ENCODE measurements at regions of chr19 and their contacts with region 1.

Region 1: DNA sequence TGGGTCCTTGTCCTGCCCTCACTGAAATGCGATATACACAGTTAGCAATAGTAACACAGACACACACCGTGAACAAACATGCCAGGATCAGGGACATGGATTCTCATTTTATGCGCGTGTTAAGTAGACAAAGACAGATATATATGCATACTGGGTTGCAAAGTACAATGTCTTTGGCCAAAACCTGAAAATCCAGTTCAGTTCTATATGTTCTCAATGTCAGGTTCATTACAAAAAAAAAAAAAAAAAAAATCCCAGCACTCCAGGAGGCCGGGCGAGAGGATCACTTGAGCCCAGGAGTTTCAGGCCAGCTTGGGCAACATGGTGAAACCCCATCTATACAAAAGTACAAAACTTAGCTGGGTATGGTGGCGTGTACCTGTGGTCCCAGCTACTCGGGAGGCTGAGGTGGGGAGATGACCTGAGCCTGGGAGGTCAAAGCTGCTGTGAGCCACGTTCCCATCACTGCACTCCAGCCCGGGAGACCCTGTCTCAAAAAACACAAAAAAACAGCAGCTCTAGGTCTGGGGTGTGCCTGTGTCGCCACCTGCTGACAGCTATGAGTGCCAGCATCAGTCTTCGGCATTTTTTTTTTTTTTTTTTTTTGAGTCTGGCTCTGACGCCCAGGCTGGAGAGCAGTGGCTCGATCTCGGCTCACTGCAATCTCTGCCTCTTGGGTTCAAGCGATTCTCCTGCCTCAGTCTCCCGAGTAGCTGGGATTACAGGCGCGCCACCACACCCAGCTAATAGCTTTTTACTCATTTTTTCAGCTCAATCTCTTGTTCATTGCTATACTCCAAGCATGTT is 10.3 kb downstream of the AP2S1 start:
- DNase-seq: peak in 12 of 14 experiments; percentile 25 to 87 (median 42)
- ATAC-seq: peak; percentile 93
- H3K4me3 ChIP-seq: no peak overlapping the region
- H3K4me3 Mint-ChIP-seq: no peak overlapping the region
- H3K27ac ChIP-seq: no peak overlapping the region
- H3K27ac Mint-ChIP-seq: no peak overlapping the region
- H3K4me1 ChIP-seq: peaks cover 6% of the 10 kb centered on the region
- H3K4me1 Mint-ChIP-seq: no peaks in the 10 kb centered on the region
- H3K27me3 ChIP-seq: no peaks in the 10 kb centered on the region
- H3K27me3 Mint-ChIP-seq: no peaks in the 10 kb centered on the region
- CTCF ChIP-seq: peak; percentile 84

Region 2: GRCh38 chr19:46704379-46705076 is 135.8 kb before region 1 on chr19:
- CTCF ChIA-PET with region 1: interaction called, 7 read pairs
- POLR2A ChIA-PET with region 1: interaction called, 3 read pairs
- intact Hi-C with region 1: loop called in 1 of 2 experiments (anchors 1 kb)
- DNase-seq: peak; percentile 72 to 95 (median 88)
- ATAC-seq: peak; percentile 99
- H3K4me3 ChIP-seq: no peak overlapping the region
- H3K4me3 Mint-ChIP-seq: no peak overlapping the region
- H3K27ac ChIP-seq: no peak overlapping the region
- H3K27ac Mint-ChIP-seq: peak overlapping the region; percentile 61
- H3K4me1 ChIP-seq: peaks cover 13% of the 10 kb centered on the region
- H3K4me1 Mint-ChIP-seq: peaks cover 15% of the 10 kb centered on the region
- H3K27me3 ChIP-seq: no peaks in the 10 kb centered on the region
- H3K27me3 Mint-ChIP-seq: no peaks in the 10 kb centered on the region
- CTCF ChIP-seq: peak; percentile 97

Region 3: GRCh38 chr19:46753420-46754155 is 86.8 kb before region 1 on chr19:
- CTCF ChIA-PET with region 1: interaction called, 48 read pairs
- POLR2A ChIA-PET with region 1: no interaction called
- intact Hi-C with region 1: loop called (anchors 1 kb)
- DNase-seq: peak; percentile 51 to 84 (median 69)
- ATAC-seq: peak; percentile 95
- H3K4me3 ChIP-seq: no peak overlapping the region
- H3K4me3 Mint-ChIP-seq: peak overlapping the region; percentile 65
- H3K27ac ChIP-seq: no peak overlapping the region
- H3K27ac Mint-ChIP-seq: no peak overlapping the region
- H3K4me1 ChIP-seq: peaks cover 17% of the 10 kb centered on the region
- H3K4me1 Mint-ChIP-seq: peaks cover 13% of the 10 kb centered on the region
- H3K27me3 ChIP-seq: no peaks in the 10 kb centered on the region
- H3K27me3 Mint-ChIP-seq: no peaks in the 10 kb centered on the region
- CTCF ChIP-seq: peak; percentile 62

Region 4: DNA sequence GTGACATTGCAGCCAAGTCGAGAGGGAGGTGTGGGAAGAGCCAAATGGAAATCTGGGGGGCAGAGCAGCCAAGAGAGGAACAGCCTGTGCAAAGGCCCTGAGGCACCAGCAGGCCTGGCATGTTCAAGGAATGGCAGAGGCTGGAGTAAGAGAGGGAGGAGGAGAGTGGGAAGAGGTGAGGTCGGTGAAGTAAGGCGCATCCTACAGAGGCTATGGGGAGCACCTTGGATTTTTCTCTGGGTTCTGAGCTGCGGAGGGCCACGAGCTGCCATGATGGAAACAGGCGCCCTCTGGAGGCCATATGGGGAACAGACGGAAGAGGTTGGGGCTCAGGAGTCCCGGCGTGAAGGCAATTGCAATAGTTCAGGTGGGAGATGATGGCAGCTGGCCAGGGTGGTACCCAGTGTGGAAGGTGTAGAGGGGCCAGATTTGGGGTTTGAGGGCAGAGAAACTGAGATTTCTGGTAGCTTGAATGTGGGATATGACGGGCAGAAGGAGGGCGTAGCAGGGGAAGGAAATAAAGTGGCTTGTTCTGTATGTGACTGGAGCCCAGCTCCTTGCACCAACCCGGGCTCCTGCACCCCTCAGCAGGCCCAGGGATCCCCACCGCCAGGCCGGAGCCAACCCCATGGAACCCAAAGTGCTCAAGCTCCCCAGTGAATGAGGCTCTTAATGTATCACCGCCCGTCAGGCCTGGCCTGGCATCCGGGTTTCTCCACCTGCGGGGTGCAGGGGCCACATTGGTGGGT is 73.6 kb before region 1 on chr19:
- CTCF ChIA-PET with region 1: interaction called, 13 read pairs
- POLR2A ChIA-PET with region 1: no interaction called
- intact Hi-C with region 1: no loop called
- DNase-seq: peak in 11 of 14 experiments; percentile 35 to 81 (median 57)
- ATAC-seq: peak; percentile 69
- H3K4me3 ChIP-seq: no peak overlapping the region
- H3K4me3 Mint-ChIP-seq: no peak overlapping the region
- H3K27ac ChIP-seq: no peak overlapping the region
- H3K27ac Mint-ChIP-seq: no peak overlapping the region
- H3K4me1 ChIP-seq: peaks cover 6% of the 10 kb centered on the region
- H3K4me1 Mint-ChIP-seq: no peaks in the 10 kb centered on the region
- H3K27me3 ChIP-seq: no peaks in the 10 kb centered on the region
- H3K27me3 Mint-ChIP-seq: no peaks in the 10 kb centered on the region
- CTCF ChIP-seq: peak; percentile 69

Region 5: GRCh38 chr19:46776927-46777911 is 63.1 kb before region 1 on chr19:
- CTCF ChIA-PET with region 1: no interaction called
- POLR2A ChIA-PET with region 1: no interaction called
- intact Hi-C with region 1: no loop called
- DNase-seq: peak in 1 of 14 experiments; percentile 44
- ATAC-seq: no peak
- H3K4me3 ChIP-seq: no peak overlapping the region
- H3K4me3 Mint-ChIP-seq: no peak overlapping the region
- H3K27ac ChIP-seq: no peak overlapping the region
- H3K27ac Mint-ChIP-seq: no peak overlapping the region
- H3K4me1 ChIP-seq: peaks cover 6% of the 10 kb centered on the region
- H3K4me1 Mint-ChIP-seq: no peaks in the 10 kb centered on the region
- H3K27me3 ChIP-seq: no peaks in the 10 kb centered on the region
- H3K27me3 Mint-ChIP-seq: no peaks in the 10 kb centered on the region
- CTCF ChIP-seq: no peak

Region 6: GRCh38 chr19:46788262-46788967 is 51.9 kb before region 1 on chr19 and contains the start of gene SLC1A5:
- CTCF ChIA-PET with region 1: interaction called, 16 read pairs
- POLR2A ChIA-PET with region 1: interaction called, 4 read pairs
- intact Hi-C with region 1: loop called in 1 of 2 experiments (anchors 1 kb)
- DNase-seq: peak; percentile 90 to 99 (median 94)
- ATAC-seq: peak; percentile 80
- H3K4me3 ChIP-seq: peak within 1 kb of the TSS; percentile 76
- H3K4me3 Mint-ChIP-seq: peak within 1 kb of the TSS; percentile 93
- H3K27ac ChIP-seq: peak within 1 kb of the TSS; percentile 44 to 72
- H3K27ac Mint-ChIP-seq: peak within 1 kb of the TSS; percentile 86
- H3K4me1 ChIP-seq: peaks cover 71% of the 10 kb centered on the region
- H3K4me1 Mint-ChIP-seq: peaks cover 62% of the 10 kb centered on the region
- H3K27me3 ChIP-seq: no peaks in the 10 kb centered on the region
- H3K27me3 Mint-ChIP-seq: no peaks in the 10 kb centered on the region
- CTCF ChIP-seq: no peak
- total RNA-seq, gene SLC1A5: 7.1 TPM

Region 7: GRCh38 chr19:46821498-46822409 is 18.6 kb before region 1 on chr19:
- CTCF ChIA-PET with region 1: interaction called, 12 read pairs
- POLR2A ChIA-PET with region 1: interaction called, 4 read pairs
- intact Hi-C with region 1: no loop called
- DNase-seq: peak; percentile 33 to 83 (median 52)
- ATAC-seq: peak; percentile 91
- H3K4me3 ChIP-seq: peak overlapping the region; percentile 13
- H3K4me3 Mint-ChIP-seq: peak overlapping the region; percentile 30
- H3K27ac ChIP-seq: peak overlapping the region; percentile 51 to 74
- H3K27ac Mint-ChIP-seq: peak overlapping the region; percentile 83
- H3K4me1 ChIP-seq: peaks cover 35% of the 10 kb centered on the region
- H3K4me1 Mint-ChIP-seq: peaks cover 26% of the 10 kb centered on the region
- H3K27me3 ChIP-seq: no peaks in the 10 kb centered on the region
- H3K27me3 Mint-ChIP-seq: no peaks in the 10 kb centered on the region
- CTCF ChIP-seq: no peak

Region 8: GRCh38 chr19:46828484-46828883 is 11.9 kb before region 1 on chr19:
- CTCF ChIA-PET with region 1: interaction called, 12 read pairs
- POLR2A ChIA-PET with region 1: interaction called, 3 read pairs
- intact Hi-C with region 1: no loop called
- DNase-seq: peak in 1 of 14 experiments; percentile 13
- ATAC-seq: no peak
- H3K4me3 ChIP-seq: no peak overlapping the region
- H3K4me3 Mint-ChIP-seq: no peak overlapping the region
- H3K27ac ChIP-seq: no peak overlapping the region
- H3K27ac Mint-ChIP-seq: no peak overlapping the region
- H3K4me1 ChIP-seq: no peaks in the 10 kb centered on the region
- H3K4me1 Mint-ChIP-seq: no peaks in the 10 kb centered on the region
- H3K27me3 ChIP-seq: no peaks in the 10 kb centered on the region
- H3K27me3 Mint-ChIP-seq: peaks cover 4% of the 10 kb centered on the region
- CTCF ChIP-seq: no peak

Region 9: GRCh38 chr19:47095476-47096099 is 255.2 kb after region 1 on chr19:
- CTCF ChIA-PET with region 1: no interaction called
- POLR2A ChIA-PET with region 1: no interaction called
- intact Hi-C with region 1: no loop called
- DNase-seq: peak in 3 of 14 experiments; percentile 43 to 78 (median 70)
- ATAC-seq: no peak
- H3K4me3 ChIP-seq: peak overlapping the region; percentile 23
- H3K4me3 Mint-ChIP-seq: peak overlapping the region; percentile 42
- H3K27ac ChIP-seq: peak overlapping the region; percentile 70 to 90
- H3K27ac Mint-ChIP-seq: peak overlapping the region; percentile 83
- H3K4me1 ChIP-seq: peaks cover 53% of the 10 kb centered on the region
- H3K4me1 Mint-ChIP-seq: peaks cover 46% of the 10 kb centered on the region
- H3K27me3 ChIP-seq: no peaks in the 10 kb centered on the region
- H3K27me3 Mint-ChIP-seq: no peaks in the 10 kb centered on the region
- CTCF ChIP-seq: no peak